Adrenal gland (tissue), 19 donors: ENCODE measurements at regions of chr9 and their contacts with region 1.

Region 1: GRCh38 chr9:14353222-14354056 is 39.5 kb upstream of the NFIB start:
- DNase-seq: peak; percentile 84 to 97 (median 92)
- H3K4me3 ChIP-seq: peak overlapping the region in 1 of 4 donors; percentile 1
- H3K27ac ChIP-seq: peak overlapping the region in 1 of 5 donors; percentile 4
- H3K4me1 ChIP-seq: peaks cover 0 to 4% of the 10 kb centered on the region in 2 donors
- H3K27me3 ChIP-seq: peaks cover 18% of the 10 kb centered on the region
- CTCF ChIP-seq: peak; percentile 79 to 92 (median 91)
- POLR2A ChIP-seq: no peak

Region 2: DNA sequence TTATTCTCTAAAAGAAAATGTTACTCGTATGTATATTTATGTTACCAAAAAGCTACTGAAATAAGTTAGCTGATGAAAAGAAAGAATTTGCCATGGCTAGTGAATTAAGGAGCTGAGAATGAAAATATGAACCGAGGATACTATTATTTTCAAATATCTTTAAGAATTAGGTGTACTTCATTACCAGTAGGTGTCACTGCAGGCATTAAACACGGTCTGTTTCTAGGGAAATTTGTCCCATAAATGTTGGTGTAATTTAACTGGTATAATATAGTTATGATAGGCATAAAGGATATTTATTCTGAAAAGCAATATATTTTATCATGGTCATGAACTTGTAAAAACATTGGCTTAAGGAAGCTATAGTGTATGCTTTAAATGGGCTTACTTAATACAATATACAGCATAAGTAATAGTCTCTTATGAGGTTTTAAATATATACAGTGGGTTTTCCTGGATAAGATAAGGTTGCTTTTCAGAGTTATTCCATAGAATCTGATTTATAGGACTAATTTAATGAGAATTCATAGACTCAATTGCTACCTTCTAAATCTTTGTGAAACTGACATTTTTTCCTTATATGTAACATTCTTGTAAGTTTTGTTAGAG is 1001.6 kb before region 1 on chr9:
- intact Hi-C with region 1: loop called in 1 of 2 experiments (anchors 10 kb)
- DNase-seq: peak in 4 of 7 donors; percentile 13 to 28 (median 26)
- H3K4me3 ChIP-seq: no peak overlapping the region
- H3K27ac ChIP-seq: no peak overlapping the region
- H3K4me1 ChIP-seq: peaks cover 0 to 10% of the 10 kb centered on the region in 2 donors
- H3K27me3 ChIP-seq: no peaks in the 10 kb centered on the region
- CTCF ChIP-seq: peak; percentile 49 to 75 (median 62)
- POLR2A ChIP-seq: no peak